ENCODE measurements at regions of chr10 and their contacts with region 1.

Region 1: DNA sequence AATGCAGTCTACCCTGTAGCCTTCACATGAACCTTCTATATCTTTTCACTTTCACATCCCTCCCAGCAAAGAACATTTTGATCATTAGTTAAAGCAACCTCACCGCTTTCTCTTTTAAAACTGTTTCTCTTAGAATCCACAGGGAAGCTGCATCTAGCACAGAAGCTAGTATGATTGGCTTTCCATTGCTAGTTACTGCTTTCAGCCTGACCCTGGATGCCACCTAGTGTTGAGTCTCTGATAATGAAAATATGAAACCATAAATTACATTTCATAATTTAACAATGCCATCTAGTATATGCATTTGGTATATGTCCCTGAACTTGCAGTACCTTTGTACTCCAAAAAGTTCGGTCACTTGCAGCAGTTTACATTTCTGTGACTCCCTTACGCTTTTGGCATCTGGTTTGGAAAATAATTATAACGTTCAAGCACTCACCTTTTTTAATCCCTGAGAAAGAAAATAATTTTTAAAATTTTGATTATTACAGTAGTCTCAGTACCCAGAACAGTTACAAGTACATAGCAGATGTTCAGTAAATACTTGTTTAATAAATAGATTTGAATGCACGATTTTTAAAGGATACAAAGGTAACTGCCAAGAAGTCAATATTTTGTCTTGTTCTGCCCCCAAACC is 22.7 kb downstream of the CISD1 start:
- DNase-seq: peak; percentile 72
- H3K4me3 ChIP-seq: no peak overlapping the region
- H3K27ac ChIP-seq: no peak overlapping the region
- H3K4me1 ChIP-seq: no peaks in the 10 kb centered on the region
- H3K27me3 ChIP-seq: no peaks in the 10 kb centered on the region
- CTCF ChIP-seq: peak; percentile 55 to 57
- POLR2A ChIP-seq: no peak

Region 2: DNA sequence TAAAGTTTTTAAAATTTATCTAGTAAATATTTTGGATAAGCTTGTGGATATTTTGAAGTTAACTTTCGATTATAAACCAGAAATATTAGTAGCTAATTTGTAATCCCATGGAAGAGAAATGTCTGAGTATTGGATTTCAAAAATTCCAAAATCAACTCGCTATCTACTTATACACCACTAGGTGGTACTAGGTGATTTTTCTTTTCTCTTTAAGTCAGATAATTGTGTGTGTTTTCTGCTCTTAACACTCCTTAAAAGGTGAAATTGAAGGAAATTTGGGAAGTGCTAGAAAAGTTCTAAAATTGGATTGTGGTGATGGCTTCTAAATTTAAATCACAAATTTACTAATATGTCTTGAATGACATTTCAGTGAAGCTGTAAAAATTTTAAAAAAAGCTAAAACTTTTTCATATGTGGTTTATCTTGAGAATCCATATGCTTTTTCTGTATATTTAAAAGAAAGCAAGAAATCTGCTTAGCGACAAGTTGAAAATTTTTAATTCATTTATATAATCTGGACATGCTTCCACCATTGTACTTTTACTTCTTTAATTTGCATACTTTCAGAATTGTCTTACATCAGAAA is 114.2 kb before region 1 on chr10:
- CTCF ChIA-PET with region 1: interaction called, 281 read pairs
- POLR2A ChIA-PET with region 1: interaction called, 4 read pairs
- dilution Hi-C with region 1: no loop called
- intact Hi-C with region 1: loop called (anchors 1 kb)
- DNase-seq: peak; percentile 44
- H3K4me3 ChIP-seq: no peak overlapping the region
- H3K27ac ChIP-seq: no peak overlapping the region
- H3K4me1 ChIP-seq: no peaks in the 10 kb centered on the region
- H3K27me3 ChIP-seq: peaks cover 0 to 3% of the 10 kb centered on the region in 2 experiments
- CTCF ChIP-seq: peak; percentile 32 to 33
- POLR2A ChIP-seq: no peak

Region 3: GRCh38 chr10:58201704-58202103 is 90.0 kb before region 1 on chr10:
- CTCF ChIA-PET with region 1: interaction called, 13 read pairs
- POLR2A ChIA-PET with region 1: no interaction called
- dilution Hi-C with region 1: no loop called
- intact Hi-C with region 1: no loop called
- DNase-seq: no peak
- H3K4me3 ChIP-seq: no peak overlapping the region
- H3K27ac ChIP-seq: no peak overlapping the region
- H3K4me1 ChIP-seq: no peaks in the 10 kb centered on the region
- H3K27me3 ChIP-seq: no peaks in the 10 kb centered on the region
- CTCF ChIP-seq: no peak
- POLR2A ChIP-seq: no peak

Region 4: GRCh38 chr10:58268870-58269605 is 22.6 kb before region 1 on chr10 and contains the start of gene CISD1:
- CTCF ChIA-PET with region 1: interaction called, 36 read pairs
- POLR2A ChIA-PET with region 1: interaction called, 4 read pairs
- dilution Hi-C with region 1: no loop called
- intact Hi-C with region 1: loop called (anchors 1 kb)
- DNase-seq: peak; percentile 99
- H3K4me3 ChIP-seq: peak within 1 kb of the TSS; percentile 62 to 82 (median 77)
- H3K27ac ChIP-seq: peak within 1 kb of the TSS; percentile 92
- H3K4me1 ChIP-seq: peaks cover 45% of the 10 kb centered on the region
- H3K27me3 ChIP-seq: no peaks in the 10 kb centered on the region
- CTCF ChIP-seq: no peak
- POLR2A ChIP-seq: peak; percentile 23
- total RNA-seq, gene CISD1: 53.0 and 57.3 TPM in 2 replicates

Measured in endothelial cell of umbilical vein (primary cell).